Activated CD4-positive, alpha-beta memory T cell treated with anti-CD3 and anti-CD28 coated beads for 36 hours (primary cell): ENCODE measurements at regions of chr19 and their contacts with region 1.

Region 1: DNA sequence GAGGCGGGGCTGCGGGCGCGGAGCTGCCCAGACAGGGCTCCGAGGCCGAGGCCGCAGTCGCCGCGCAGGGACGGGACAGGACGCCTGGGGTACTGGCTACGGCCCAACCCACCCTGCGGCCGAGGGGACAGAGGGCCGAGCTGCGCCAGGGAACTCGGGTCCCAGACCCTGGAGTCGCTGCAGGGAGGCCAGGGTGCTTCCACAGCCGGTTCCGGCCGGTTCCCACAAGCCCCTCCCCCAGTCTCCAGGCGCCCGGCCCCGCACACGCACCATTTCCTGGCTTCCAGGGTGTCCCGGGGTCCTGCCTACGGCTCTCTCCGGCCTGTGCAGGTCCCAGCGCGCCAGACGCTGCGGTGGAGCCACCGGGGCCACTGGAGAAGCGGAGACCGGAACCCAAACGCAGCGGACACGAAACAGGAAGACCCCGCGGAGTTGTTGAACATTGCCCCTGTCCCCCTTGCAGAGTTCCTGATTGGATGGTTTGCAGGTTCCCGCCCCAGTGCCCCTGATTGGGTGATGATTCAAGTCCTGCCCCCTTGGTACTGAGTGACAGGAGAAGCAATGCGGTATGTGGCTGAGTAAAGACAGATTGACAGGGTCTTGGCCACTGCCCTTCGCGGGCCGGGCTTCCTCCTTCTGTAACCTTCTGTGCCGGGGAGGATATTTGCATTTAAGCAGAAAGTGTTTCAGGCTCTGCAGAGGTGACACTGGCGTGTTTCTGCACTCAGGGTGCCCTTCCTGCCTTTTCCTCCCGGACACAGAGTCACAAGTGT is at the start of gene ZNF564:
- DNase-seq: peak; percentile 95
- H3K4me3 Mint-ChIP-seq: peak within 1 kb of the TSS; percentile 94
- H3K27ac Mint-ChIP-seq: peak within 1 kb of the TSS; percentile 90
- H3K4me1 Mint-ChIP-seq: peaks cover 35% of the 10 kb centered on the region
- H3K27me3 Mint-ChIP-seq: no peaks in the 10 kb centered on the region
- total RNA-seq, gene ZNF564: 6.5 to 7.0 TPM

Region 2: GRCh38 chr19:12294249-12295158 is 256.7 kb before region 1 on chr19 and contains the start of gene ZNF44:
- CTCF ChIA-PET with region 1: no interaction called
- POLR2A ChIA-PET with region 1: interaction called, 3 read pairs
- intact Hi-C with region 1: loop called (anchors 5 kb)
- DNase-seq: peak; percentile 99
- H3K4me3 Mint-ChIP-seq: peak within 1 kb of the TSS; percentile 98
- H3K27ac Mint-ChIP-seq: peak within 1 kb of the TSS; percentile 98
- H3K4me1 Mint-ChIP-seq: peaks cover 27% of the 10 kb centered on the region
- H3K27me3 Mint-ChIP-seq: no peaks in the 10 kb centered on the region
- total RNA-seq, gene ZNF44: 7.5 to 8.9 TPM

Region 3: DNA sequence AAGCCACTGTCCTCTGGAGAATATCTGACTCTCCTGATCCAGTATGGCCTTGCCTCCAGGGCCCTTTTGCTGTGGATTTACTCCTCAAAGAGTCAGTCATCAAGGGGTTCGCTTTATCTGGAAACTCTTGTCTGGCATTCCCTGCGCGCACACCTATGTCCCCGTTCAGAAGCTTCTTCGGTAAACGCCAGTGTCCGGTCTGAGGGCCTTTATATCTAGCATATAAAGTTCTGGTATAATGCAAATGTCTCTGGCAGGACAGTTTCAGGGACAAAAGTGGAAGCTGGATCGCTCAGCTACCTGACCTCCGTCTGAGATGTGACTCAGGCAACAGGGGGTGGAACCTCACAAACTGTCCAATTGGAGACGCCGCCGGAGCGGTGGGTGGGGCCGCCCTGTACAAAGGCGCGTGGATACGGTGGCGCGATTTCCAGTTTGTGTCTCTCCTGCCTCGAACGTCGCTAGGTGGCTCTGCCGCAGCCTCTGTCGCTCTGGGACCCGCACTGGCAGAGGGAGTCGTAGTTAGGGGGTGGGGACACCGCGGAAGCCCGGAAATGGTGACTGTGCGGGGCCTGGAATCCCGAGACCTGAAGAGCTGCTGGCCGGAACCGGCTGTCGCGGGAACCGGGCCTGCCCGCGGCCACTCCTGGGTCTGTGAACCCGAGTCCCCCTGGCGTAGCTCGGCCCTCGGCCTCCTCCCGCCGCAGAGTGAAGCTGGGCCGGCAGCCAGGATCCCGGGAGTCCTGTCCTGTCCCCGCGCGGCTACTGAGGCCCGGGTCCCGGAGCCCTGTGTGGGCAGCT is 56.0 kb before region 1 on chr19:
- CTCF ChIA-PET with region 1: no interaction called
- POLR2A ChIA-PET with region 1: interaction called, 4 read pairs
- intact Hi-C with region 1: loop called (anchors 1 kb)
- DNase-seq: peak; percentile 98
- H3K4me3 Mint-ChIP-seq: peak overlapping the region; percentile 86
- H3K27ac Mint-ChIP-seq: peak overlapping the region; percentile 88
- H3K4me1 Mint-ChIP-seq: peaks cover 12% of the 10 kb centered on the region
- H3K27me3 Mint-ChIP-seq: no peaks in the 10 kb centered on the region

Region 4: GRCh38 chr19:12610540-12611360 is 59.5 kb after region 1 on chr19 and contains the starts of genes ZNF490 and ZNF791:
- CTCF ChIA-PET with region 1: no interaction called
- POLR2A ChIA-PET with region 1: no interaction called
- intact Hi-C with region 1: loop called (anchors 5 kb)
- DNase-seq: peak; percentile 98
- H3K4me3 Mint-ChIP-seq: peak within 1 kb of the TSS; percentile 100
- H3K27ac Mint-ChIP-seq: peak within 1 kb of the TSS; percentile 99
- H3K4me1 Mint-ChIP-seq: peaks cover 26% of the 10 kb centered on the region
- H3K27me3 Mint-ChIP-seq: no peaks in the 10 kb centered on the region
- total RNA-seq, gene ZNF490: 6.9 to 7.0 TPM
- total RNA-seq, gene ZNF791: 18.2 to 19.1 TPM